Endothelial cell of umbilical vein (primary cell): ENCODE measurements at regions of chr4 and their contacts with region 1.

Region 1: GRCh38 chr4:55345980-55346850 is at the start of gene SRD5A3:
- DNase-seq: peak; percentile 85
- H3K4me3 ChIP-seq: peak within 1 kb of the TSS; percentile 51 to 75 (median 65)
- H3K27ac ChIP-seq: peak within 1 kb of the TSS; percentile 69
- H3K4me1 ChIP-seq: peaks cover 11% of the 10 kb centered on the region
- H3K27me3 ChIP-seq: no peaks in the 10 kb centered on the region
- CTCF ChIP-seq: peak; percentile 84 to 92
- POLR2A ChIP-seq: peak; percentile 69
- total RNA-seq, gene SRD5A3: 24.3 and 30.4 TPM in 2 replicates

Region 2: DNA sequence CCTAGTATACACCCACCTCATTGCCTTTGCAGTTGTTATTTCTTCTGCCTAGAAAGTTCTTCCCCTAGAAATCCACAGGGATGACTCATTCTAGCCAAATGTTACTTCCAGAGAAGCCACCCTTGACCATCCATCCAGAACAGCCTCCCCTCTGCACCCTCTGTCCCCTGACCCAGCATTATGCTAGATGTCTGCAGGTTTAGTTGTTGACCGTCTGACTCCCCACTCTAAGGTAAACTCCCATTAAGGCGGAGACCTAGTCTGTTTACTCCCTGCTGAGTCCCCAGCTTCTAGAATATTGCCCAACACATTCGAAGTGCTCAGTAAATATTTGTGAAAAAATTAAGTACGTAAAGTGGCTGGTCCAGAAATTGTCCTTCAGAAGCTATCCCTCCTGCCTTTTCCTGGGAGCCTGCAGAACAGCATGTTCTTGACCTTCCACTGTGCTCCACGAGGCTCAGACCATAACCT is 10.8 kb after region 1 on chr4:
- CTCF ChIA-PET with region 1: interaction called, 12 read pairs
- POLR2A ChIA-PET with region 1: no interaction called
- dilution Hi-C with region 1: no loop called
- intact Hi-C with region 1: no loop called
- DNase-seq: no peak
- H3K4me3 ChIP-seq: no peak overlapping the region
- H3K27ac ChIP-seq: no peak overlapping the region
- H3K4me1 ChIP-seq: peaks cover 19% of the 10 kb centered on the region
- H3K27me3 ChIP-seq: no peaks in the 10 kb centered on the region
- CTCF ChIP-seq: no peak
- POLR2A ChIP-seq: no peak

Region 3: GRCh38 chr4:55378617-55379463 is 32.6 kb after region 1 on chr4:
- CTCF ChIA-PET with region 1: no interaction called
- POLR2A ChIA-PET with region 1: no interaction called
- dilution Hi-C with region 1: no loop called
- intact Hi-C with region 1: no loop called
- DNase-seq: no peak
- H3K4me3 ChIP-seq: no peak overlapping the region
- H3K27ac ChIP-seq: no peak overlapping the region
- H3K4me1 ChIP-seq: no peaks in the 10 kb centered on the region
- H3K27me3 ChIP-seq: no peaks in the 10 kb centered on the region
- CTCF ChIP-seq: no peak
- POLR2A ChIP-seq: no peak

Region 4: DNA sequence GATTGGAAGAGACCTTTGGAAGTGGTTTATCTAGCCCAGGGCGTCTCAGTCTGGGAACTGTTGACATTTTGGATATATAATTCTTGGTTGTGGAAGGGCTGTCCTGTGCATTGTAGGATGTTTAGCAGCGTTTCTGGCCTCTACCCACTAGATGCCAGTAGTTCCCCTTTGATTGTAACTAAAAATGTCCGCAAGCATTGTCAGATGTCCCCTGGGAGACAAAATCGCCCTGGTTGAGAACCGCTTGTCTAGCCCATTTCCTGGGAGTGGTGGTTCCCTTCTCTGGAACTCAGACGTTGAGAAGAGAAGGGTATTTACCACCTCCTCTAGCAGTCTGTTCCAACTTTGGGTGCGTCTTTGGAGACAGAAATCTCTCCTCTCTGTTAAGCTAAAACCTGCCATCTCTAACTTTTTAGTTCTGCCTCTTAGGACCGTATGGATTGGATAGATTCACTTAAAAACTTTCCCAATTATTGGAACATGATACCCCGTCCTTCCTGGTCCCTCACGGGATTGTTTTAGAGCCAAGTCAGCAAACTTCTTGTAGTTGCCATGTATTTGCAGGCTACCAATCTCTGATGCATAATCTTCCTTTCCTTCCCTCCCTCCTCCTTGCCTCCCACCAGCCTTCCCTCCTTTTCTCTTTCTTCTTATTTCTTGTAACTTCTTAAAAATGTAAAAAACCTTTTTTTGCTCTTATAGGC is 63.4 kb after region 1 on chr4:
- CTCF ChIA-PET with region 1: interaction called, 8 read pairs
- POLR2A ChIA-PET with region 1: interaction called, 13 read pairs
- dilution Hi-C with region 1: no loop called
- intact Hi-C with region 1: no loop called
- DNase-seq: no peak
- H3K4me3 ChIP-seq: no peak overlapping the region
- H3K27ac ChIP-seq: no peak overlapping the region
- H3K4me1 ChIP-seq: no peaks in the 10 kb centered on the region
- H3K27me3 ChIP-seq: no peaks in the 10 kb centered on the region
- CTCF ChIP-seq: no peak
- POLR2A ChIP-seq: no peak

Region 5: DNA sequence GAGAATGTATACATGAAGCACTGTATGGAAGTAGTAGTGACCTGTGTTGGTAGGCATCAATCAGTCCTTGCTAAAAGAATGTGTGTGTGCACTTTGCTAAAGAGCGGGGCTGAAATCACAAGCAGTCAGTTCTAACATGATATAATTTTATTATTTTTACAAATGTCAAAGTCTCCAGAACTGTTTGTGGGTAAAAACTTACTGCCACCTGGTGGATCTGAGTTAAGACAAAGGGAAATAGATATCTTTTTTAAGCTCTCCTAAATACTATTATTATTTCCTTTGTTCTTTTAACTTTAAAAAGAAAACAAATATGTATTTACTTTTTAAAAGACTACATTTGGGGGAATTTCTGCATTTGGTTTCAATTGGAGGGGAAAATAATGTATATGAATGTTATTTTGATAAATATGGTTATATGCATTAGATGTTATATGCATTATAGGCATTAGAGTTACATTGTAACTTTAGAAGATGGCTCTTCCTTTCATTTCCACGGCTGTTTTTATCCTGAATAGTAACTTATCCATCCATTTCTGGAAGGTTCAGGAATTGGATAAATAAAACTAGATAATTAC is 208.3 kb after region 1 on chr4:
- CTCF ChIA-PET with region 1: interaction called, 35 read pairs
- POLR2A ChIA-PET with region 1: no interaction called
- dilution Hi-C with region 1: no loop called
- intact Hi-C with region 1: loop called (anchors 1 kb)
- DNase-seq: peak; percentile 55
- H3K4me3 ChIP-seq: no peak overlapping the region
- H3K27ac ChIP-seq: no peak overlapping the region
- H3K4me1 ChIP-seq: no peaks in the 10 kb centered on the region
- H3K27me3 ChIP-seq: peaks cover under 1 to 2% of the 10 kb centered on the region in 2 experiments
- CTCF ChIP-seq: peak; percentile 14 to 23
- POLR2A ChIP-seq: no peak

Region 6: GRCh38 chr4:55948726-55949474 is 602.7 kb after region 1 on chr4 and contains the start of gene CEP135:
- CTCF ChIA-PET with region 1: no interaction called
- POLR2A ChIA-PET with region 1: no interaction called
- dilution Hi-C with region 1: no loop called
- intact Hi-C with region 1: no loop called
- DNase-seq: peak; percentile 94
- H3K4me3 ChIP-seq: peak within 1 kb of the TSS; percentile 72 to 99 (median 72)
- H3K27ac ChIP-seq: peak within 1 kb of the TSS; percentile 100
- H3K4me1 ChIP-seq: peaks cover 31% of the 10 kb centered on the region
- H3K27me3 ChIP-seq: no peaks in the 10 kb centered on the region
- CTCF ChIP-seq: peak; percentile 96 to 98
- POLR2A ChIP-seq: peak; percentile 89
- total RNA-seq, gene CEP135: 14.7 and 15.3 TPM in 2 replicates